ENCODE measurements at regions of chr12 and their contacts with region 1.

Region 1: GRCh38 chr12:62603061-62603810 is 136.6 kb downstream of the MON2 start:
- DNase-seq: peak; percentile 87
- H3K4me3 Mint-ChIP-seq: peak overlapping the region; percentile 94
- H3K27ac Mint-ChIP-seq: peak overlapping the region; percentile 100
- H3K4me1 Mint-ChIP-seq: peaks cover 29% of the 10 kb centered on the region
- H3K27me3 Mint-ChIP-seq: no peaks in the 10 kb centered on the region
- CTCF ChIP-seq: peak; percentile 20

Region 2: DNA sequence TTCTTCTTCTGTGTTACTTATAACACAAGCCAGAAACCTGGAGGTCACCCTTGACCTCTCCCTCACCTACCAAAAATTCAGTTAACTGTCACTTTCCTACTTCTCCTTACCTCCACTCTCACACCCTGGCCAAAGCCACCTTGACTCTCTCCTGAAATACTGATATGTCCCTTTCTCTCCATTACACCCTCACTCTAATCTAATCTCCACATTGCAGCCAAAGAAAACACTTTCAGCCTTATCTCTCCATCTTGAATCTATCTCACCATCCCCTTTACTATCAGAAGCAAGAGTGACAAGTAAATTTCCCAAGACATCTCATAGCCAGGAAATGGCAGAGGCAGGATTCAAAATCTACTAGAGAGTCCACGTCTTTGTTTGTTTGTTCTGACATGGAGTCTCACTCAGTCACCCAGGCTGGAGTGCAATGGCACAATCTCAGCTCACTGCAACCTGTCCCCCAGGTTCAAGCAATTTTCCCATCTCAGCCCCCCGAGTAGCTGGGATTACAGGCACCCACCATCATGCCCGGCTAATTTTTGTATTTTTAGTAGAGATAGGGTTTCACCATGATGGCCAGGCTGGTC is 371.0 kb before region 1 on chr12:
- CTCF ChIA-PET with region 1: no interaction called
- POLR2A ChIA-PET with region 1: no interaction called
- intact Hi-C with region 1: no loop called
- DNase-seq: no peak
- H3K4me3 Mint-ChIP-seq: no peak overlapping the region
- H3K27ac Mint-ChIP-seq: no peak overlapping the region
- H3K4me1 Mint-ChIP-seq: no peaks in the 10 kb centered on the region
- H3K27me3 Mint-ChIP-seq: no peaks in the 10 kb centered on the region
- CTCF ChIP-seq: no peak

Region 3: GRCh38 chr12:62435303-62436163 is 167.7 kb before region 1 on chr12:
- CTCF ChIA-PET with region 1: interaction called, 4 read pairs
- POLR2A ChIA-PET with region 1: interaction called, 4 read pairs
- intact Hi-C with region 1: loop called (anchors 1 kb)
- DNase-seq: peak; percentile 32
- H3K4me3 Mint-ChIP-seq: peak overlapping the region; percentile 71
- H3K27ac Mint-ChIP-seq: no peak overlapping the region
- H3K4me1 Mint-ChIP-seq: peaks cover 20% of the 10 kb centered on the region
- H3K27me3 Mint-ChIP-seq: peaks cover 21% of the 10 kb centered on the region
- CTCF ChIP-seq: no peak

Region 4: DNA sequence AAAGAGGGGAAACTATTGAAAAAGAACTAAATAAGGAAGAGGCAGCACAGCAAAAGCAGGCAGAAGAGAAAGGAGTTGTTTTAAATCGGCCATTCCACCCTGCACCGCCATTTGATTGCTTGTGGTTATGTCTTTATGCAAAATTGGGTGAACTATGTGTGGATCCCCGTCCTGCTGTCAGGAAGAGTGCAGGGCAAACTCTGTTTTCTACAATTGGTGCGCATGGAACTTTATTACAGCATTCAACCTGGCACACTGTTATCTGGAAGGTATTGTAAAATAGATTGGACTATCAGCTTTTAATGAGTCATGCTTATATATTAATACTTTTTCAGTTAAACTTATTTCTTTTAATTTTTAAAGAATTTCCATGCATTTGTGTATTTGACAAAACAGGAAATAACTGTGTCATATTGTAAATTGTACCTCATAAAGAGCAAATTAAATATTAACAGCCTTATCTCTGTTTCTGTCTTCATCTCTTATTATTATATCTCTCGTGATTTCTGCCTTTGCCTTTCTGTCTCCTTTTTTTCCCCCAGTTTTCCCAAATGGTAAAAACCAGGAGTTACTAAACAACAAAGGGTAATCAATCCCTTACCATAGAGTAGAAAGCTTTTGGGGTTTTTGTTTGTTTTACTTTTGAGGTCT is 50.2 kb before region 1 on chr12:
- CTCF ChIA-PET with region 1: no interaction called
- POLR2A ChIA-PET with region 1: no interaction called
- intact Hi-C with region 1: no loop called
- DNase-seq: no peak
- H3K4me3 Mint-ChIP-seq: no peak overlapping the region
- H3K27ac Mint-ChIP-seq: peak overlapping the region; percentile 80
- H3K4me1 Mint-ChIP-seq: no peaks in the 10 kb centered on the region
- H3K27me3 Mint-ChIP-seq: no peaks in the 10 kb centered on the region
- CTCF ChIP-seq: no peak

Region 5: DNA sequence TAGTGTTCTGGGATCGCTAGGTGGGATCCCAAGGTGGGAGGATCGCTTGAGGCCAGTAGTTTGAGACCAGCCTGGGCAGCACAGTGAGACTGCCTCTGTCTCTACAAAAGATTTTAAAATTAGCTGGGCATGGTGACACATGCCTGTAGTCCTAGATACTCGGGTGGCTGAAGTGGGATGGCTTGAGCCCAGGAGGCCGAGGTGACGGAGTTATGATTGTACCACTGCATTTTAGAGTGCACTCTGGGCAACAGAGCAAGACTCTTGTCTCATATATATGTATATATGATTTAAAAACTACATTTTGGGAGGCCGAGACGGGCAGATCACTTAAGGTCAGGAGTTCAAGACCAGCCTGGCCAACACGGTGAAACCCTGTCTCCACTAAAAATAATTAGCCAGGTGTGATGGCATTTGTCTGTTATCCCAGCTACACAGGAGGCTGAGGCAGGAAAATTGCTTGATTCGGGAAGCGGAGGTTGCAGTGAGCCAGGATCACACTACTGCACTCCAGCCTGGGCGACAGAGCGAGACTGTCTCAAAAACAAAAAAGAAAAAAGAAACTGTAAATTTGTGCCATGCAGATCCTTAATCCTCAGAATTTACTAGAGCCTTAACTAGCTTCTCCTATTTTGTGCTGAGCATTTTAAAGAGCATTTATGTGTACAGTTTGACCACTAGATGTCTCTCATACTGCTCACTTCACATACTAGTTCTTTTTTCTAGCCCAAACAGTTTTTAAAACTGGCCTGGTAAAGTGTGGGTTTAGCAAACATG is 21.8 kb before region 1 on chr12:
- CTCF ChIA-PET with region 1: interaction called, 14 read pairs
- POLR2A ChIA-PET with region 1: interaction called, 8 read pairs
- intact Hi-C with region 1: loop called (anchors 1 kb)
- DNase-seq: peak; percentile 53
- H3K4me3 Mint-ChIP-seq: no peak overlapping the region
- H3K27ac Mint-ChIP-seq: no peak overlapping the region
- H3K4me1 Mint-ChIP-seq: no peaks in the 10 kb centered on the region
- H3K27me3 Mint-ChIP-seq: no peaks in the 10 kb centered on the region
- CTCF ChIP-seq: peak; percentile 49

Region 6: DNA sequence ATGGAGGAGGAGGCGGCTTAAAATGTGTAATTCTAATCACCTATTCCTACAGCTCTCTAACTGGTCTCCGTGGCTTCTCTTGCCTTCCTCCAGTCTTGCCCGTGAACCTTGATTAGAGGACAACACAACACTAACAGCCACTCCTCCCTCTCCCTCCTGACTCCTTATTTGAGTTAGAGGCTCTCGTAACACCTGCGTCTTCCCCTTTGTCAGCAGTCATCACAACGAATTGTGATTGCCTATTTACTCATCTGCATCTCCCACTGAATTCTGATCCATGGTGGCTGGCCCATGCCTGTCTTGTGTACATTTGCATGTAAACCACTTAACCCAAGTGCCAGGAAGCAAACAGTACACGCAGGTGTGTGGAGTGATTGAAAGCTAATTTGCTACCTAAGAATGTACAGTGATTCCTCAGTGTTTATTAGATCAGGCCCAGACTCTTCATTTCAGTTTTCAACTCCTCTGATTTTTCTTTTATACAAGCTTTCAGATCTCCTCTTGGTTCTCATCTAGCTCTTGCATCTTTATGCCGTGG is 17.9 kb after region 1 on chr12:
- CTCF ChIA-PET with region 1: interaction called, 6 read pairs
- POLR2A ChIA-PET with region 1: interaction called, 16 read pairs
- intact Hi-C with region 1: no loop called
- DNase-seq: no peak
- H3K4me3 Mint-ChIP-seq: no peak overlapping the region
- H3K27ac Mint-ChIP-seq: no peak overlapping the region
- H3K4me1 Mint-ChIP-seq: peaks cover 4% of the 10 kb centered on the region
- H3K27me3 Mint-ChIP-seq: no peaks in the 10 kb centered on the region
- CTCF ChIP-seq: no peak

Region 7: GRCh38 chr12:62785941-62786559 is 182.8 kb after region 1 on chr12:
- CTCF ChIA-PET with region 1: interaction called, 14 read pairs
- POLR2A ChIA-PET with region 1: interaction called, 4 read pairs
- intact Hi-C with region 1: no loop called
- DNase-seq: peak; percentile 94
- H3K4me3 Mint-ChIP-seq: no peak overlapping the region
- H3K27ac Mint-ChIP-seq: peak overlapping the region; percentile 0
- H3K4me1 Mint-ChIP-seq: peaks cover 13% of the 10 kb centered on the region
- H3K27me3 Mint-ChIP-seq: no peaks in the 10 kb centered on the region
- CTCF ChIP-seq: no peak

Region 8: GRCh38 chr12:62799126-62799736 is 196.0 kb after region 1 on chr12:
- CTCF ChIA-PET with region 1: interaction called, 33 read pairs
- POLR2A ChIA-PET with region 1: interaction called, 27 read pairs
- intact Hi-C with region 1: loop called (anchors 1 kb)
- DNase-seq: peak; percentile 74
- H3K4me3 Mint-ChIP-seq: no peak overlapping the region
- H3K27ac Mint-ChIP-seq: no peak overlapping the region
- H3K4me1 Mint-ChIP-seq: no peaks in the 10 kb centered on the region
- H3K27me3 Mint-ChIP-seq: no peaks in the 10 kb centered on the region
- CTCF ChIP-seq: peak; percentile 86

Region 9: DNA sequence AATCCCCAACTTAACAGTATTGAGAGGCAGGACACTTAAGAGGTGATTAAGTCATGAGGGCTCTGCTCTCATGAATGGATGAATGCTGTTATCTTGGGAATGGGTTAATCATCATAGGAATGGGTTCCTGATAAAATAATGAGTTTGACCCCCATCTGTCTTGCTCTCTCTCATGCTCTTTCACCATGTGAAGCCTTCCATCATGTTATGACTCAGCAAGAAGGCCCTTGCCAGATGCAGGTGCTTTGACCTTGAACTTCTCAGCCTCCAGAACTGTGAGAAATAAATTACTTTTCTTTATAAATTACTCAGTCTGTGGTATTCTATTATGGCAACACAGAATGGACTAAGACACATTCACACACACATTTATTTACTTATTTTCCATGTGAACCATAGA is 420.7 kb after region 1 on chr12:
- CTCF ChIA-PET with region 1: no interaction called
- POLR2A ChIA-PET with region 1: no interaction called
- intact Hi-C with region 1: no loop called
- DNase-seq: no peak
- H3K4me3 Mint-ChIP-seq: no peak overlapping the region
- H3K27ac Mint-ChIP-seq: no peak overlapping the region
- H3K4me1 Mint-ChIP-seq: no peaks in the 10 kb centered on the region
- H3K27me3 Mint-ChIP-seq: no peaks in the 10 kb centered on the region
- CTCF ChIP-seq: no peak